ENCODE measurements at regions of chr9 and their contacts with region 1.

Region 1: GRCh38 chr9:27333241-27334052 is 36.5 kb upstream of the EQTN start:
- DNase-seq: peak; percentile 56
- H3K4me3 ChIP-seq: no peak overlapping the region
- H3K27ac ChIP-seq: no peak overlapping the region
- H3K4me1 ChIP-seq: no peaks in the 10 kb centered on the region
- H3K27me3 ChIP-seq: no peaks in the 10 kb centered on the region
- CTCF ChIP-seq: peak; percentile 39 to 85 (median 82)
- POLR2A ChIP-seq: no peak

Region 2: DNA sequence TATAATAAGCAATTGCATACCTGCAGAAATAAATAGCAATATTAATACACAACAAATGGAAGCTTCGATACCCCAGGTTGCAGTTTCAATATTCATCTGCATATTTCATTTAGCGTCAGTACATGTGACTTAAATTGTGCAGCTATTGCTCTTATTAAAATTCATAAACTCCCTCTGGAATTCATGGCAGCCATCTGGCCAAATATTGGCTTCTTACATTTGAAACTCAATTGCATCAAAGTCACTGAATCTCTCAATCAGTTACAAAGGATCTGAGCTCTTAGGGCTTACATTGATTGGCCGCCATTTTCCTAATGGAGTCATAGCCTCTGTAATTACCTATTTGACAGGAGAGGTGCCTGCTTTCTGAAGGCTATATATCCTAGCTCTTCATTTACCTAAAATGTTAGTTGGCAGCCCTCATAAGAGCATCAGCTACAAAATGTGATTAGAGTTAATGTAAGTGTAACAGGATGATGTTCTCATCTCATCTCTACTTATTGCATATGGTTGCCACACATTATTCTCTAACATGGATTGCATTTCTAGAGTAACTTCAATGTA is 894.3 kb before region 1 on chr9:
- intact Hi-C with region 1: no loop called
- DNase-seq: no peak
- H3K4me3 ChIP-seq: no peak overlapping the region
- H3K27ac ChIP-seq: no peak overlapping the region
- H3K4me1 ChIP-seq: no peaks in the 10 kb centered on the region
- H3K27me3 ChIP-seq: no peaks in the 10 kb centered on the region
- CTCF ChIP-seq: no peak
- POLR2A ChIP-seq: no peak

Region 3: GRCh38 chr9:27395484-27395921 is 62.1 kb after region 1 on chr9:
- intact Hi-C with region 1: loop called (anchors 10 kb)
- DNase-seq: no peak
- H3K4me3 ChIP-seq: no peak overlapping the region
- H3K27ac ChIP-seq: no peak overlapping the region
- H3K4me1 ChIP-seq: peaks cover 8% of the 10 kb centered on the region
- H3K27me3 ChIP-seq: no peaks in the 10 kb centered on the region
- CTCF ChIP-seq: no peak
- POLR2A ChIP-seq: no peak

Region 4: DNA sequence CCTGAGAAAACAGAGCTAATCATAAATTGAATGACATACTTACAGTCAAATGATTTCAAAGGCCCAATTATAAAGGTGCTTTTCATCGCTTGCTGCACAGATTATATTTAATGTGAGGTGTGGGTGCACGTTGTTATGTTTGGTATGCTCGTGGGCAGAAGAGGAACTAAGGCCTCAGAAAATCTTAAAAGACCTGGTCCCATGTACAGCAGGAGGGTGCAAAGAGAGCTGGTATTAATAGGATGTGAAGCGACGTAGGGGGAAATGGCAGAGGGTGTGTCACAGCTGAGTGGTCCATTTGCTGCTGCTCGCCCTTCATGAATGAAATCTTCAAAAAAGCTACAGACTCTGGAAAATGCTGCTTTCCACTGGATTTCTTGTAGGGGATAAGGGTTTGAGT is 150.1 kb after region 1 on chr9:
- intact Hi-C with region 1: loop called (anchors 5 kb)
- DNase-seq: no peak
- H3K4me3 ChIP-seq: no peak overlapping the region
- H3K27ac ChIP-seq: no peak overlapping the region
- H3K4me1 ChIP-seq: no peaks in the 10 kb centered on the region
- H3K27me3 ChIP-seq: no peaks in the 10 kb centered on the region
- CTCF ChIP-seq: no peak
- POLR2A ChIP-seq: no peak

Region 5: GRCh38 chr9:27529316-27530278 is 196.2 kb after region 1 on chr9 and contains the start of gene MOB3B:
- intact Hi-C with region 1: loop called (anchors 5 kb)
- DNase-seq: peak; percentile 74
- H3K4me3 ChIP-seq: peak within 1 kb of the TSS; percentile 66 to 72
- H3K27ac ChIP-seq: peak within 1 kb of the TSS; percentile 78
- H3K4me1 ChIP-seq: peaks cover 4% of the 10 kb centered on the region
- H3K27me3 ChIP-seq: no peaks in the 10 kb centered on the region
- CTCF ChIP-seq: peak; percentile 82 to 94 (median 92)
- POLR2A ChIP-seq: no peak
- total RNA-seq, gene MOB3B: 3.1 to 17.8 TPM

Region 6: DNA sequence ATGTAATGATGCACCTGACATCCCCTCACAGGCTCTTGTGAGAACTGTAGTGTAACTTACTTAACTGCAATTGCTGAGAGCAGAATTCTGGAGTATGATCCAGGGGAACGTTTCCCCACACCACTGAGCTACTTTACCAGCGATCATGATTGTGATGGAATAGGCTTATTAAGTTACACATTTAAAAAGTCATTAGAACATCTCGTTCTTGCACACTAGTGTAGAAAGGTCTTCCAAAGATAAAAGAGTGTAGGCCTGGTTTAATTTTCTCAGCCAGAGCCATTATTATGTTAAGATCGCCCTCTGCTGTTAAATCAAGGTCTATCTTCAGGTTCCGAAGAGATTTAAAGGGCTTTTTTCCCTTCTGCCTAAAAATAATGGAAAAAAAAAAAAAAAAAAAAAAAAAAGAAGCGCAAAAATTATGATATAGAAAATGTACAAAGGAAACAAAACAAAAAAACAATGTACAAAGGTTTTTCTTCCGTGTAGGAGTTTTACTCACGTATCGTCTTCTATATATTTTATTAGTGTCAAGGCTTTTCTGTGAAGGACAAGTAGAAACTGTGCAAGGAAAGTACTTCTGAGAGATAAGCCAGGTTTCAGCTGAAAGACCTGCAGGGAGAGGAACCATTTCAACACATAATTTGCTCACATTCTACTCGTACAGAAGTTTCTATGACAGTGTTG is 214.8 kb after region 1 on chr9:
- intact Hi-C with region 1: loop called (anchors 1 kb)
- DNase-seq: no peak
- H3K4me3 ChIP-seq: no peak overlapping the region
- H3K27ac ChIP-seq: no peak overlapping the region
- H3K4me1 ChIP-seq: no peaks in the 10 kb centered on the region
- H3K27me3 ChIP-seq: no peaks in the 10 kb centered on the region
- CTCF ChIP-seq: peak in 3 of 4 experiments; percentile 30 to 67 (median 56)
- POLR2A ChIP-seq: no peak